ENCODE measurements at regions of chr11 and their contacts with region 1.

Region 1: GRCh38 chr11:114197799-114198500 is 98.2 kb upstream of the NNMT start:
- DNase-seq: no peak
- ATAC-seq: no peak
- H3K4me3 ChIP-seq: no peak overlapping the region
- H3K4me3 Mint-ChIP-seq: no peak overlapping the region
- H3K27ac ChIP-seq: no peak overlapping the region
- H3K27ac Mint-ChIP-seq: peak overlapping the region; percentile 10
- H3K4me1 ChIP-seq: peaks cover 27 to 47% of the 10 kb centered on the region in 2 donors
- H3K4me1 Mint-ChIP-seq: peaks cover 39% of the 10 kb centered on the region
- H3K27me3 ChIP-seq: no peaks in the 10 kb centered on the region
- H3K27me3 Mint-ChIP-seq: no peaks in the 10 kb centered on the region
- CTCF ChIP-seq: no peak

Region 2: DNA sequence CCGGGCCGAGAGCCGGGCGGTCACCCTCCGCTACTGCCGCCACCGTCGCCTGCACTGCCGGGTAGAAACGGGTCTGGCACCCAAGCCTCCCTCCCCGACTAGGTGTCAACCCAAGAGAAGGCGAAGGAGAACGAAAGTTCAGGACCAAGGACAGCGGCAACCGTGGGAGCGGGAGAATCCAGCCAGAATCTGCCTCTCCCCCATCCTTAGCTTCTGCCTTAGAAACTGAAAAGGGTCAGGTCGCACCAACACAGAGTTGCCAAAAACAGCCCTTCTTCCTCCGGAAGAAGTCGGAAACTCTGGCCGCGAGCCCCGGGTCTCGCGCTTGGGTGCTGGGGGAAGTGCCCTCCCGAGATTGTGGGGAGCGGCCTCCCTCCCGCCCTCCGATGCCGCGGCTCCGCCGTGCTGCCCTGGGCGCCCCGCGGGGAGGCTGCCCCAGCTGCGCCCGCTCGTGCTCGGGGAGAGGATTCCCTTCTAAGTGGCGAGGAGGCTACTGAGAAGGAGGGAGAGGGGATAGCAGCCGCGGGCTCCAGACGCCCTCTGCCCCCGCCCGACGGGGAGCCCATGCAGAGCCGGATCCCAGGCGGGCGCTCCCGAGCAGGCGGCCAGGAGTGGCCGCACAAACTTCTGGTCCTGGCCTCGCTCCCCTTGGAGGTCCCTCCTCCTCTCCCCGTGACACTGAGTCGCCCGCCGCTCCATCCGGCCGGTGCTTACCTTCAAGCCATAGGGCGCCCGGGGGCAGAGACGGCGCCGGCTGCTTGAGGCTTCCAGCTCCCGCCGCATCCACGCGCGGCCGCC is 723.4 kb before region 1 on chr11:
- CTCF ChIA-PET with region 1: no interaction called
- POLR2A ChIA-PET with region 1: no interaction called
- intact Hi-C with region 1: no loop called
- DNase-seq: peak; percentile 34
- ATAC-seq: no peak
- H3K4me3 ChIP-seq: no peak overlapping the region
- H3K4me3 Mint-ChIP-seq: peak overlapping the region; percentile 29
- H3K27ac ChIP-seq: no peak overlapping the region
- H3K27ac Mint-ChIP-seq: no peak overlapping the region
- H3K4me1 ChIP-seq: peaks cover 3 to 7% of the 10 kb centered on the region in 2 donors
- H3K4me1 Mint-ChIP-seq: peaks cover 7% of the 10 kb centered on the region
- H3K27me3 ChIP-seq: peaks cover 0 to 36% (median 19%) of the 10 kb centered on the region in 4 experiments
- H3K27me3 Mint-ChIP-seq: peaks cover 61% of the 10 kb centered on the region
- CTCF ChIP-seq: no peak

Region 3: GRCh38 chr11:114036156-114036811 is 161.7 kb before region 1 on chr11:
- CTCF ChIA-PET with region 1: interaction called, 12 read pairs
- POLR2A ChIA-PET with region 1: no interaction called
- intact Hi-C with region 1: loop called (anchors 2 kb)
- DNase-seq: peak; percentile 72
- ATAC-seq: peak; percentile 93
- H3K4me3 ChIP-seq: peak overlapping the region in 3 of 5 experiments; percentile 18 to 48 (median 22)
- H3K4me3 Mint-ChIP-seq: no peak overlapping the region
- H3K27ac ChIP-seq: no peak overlapping the region
- H3K27ac Mint-ChIP-seq: no peak overlapping the region
- H3K4me1 ChIP-seq: peaks cover 0 to 12% of the 10 kb centered on the region in 2 donors
- H3K4me1 Mint-ChIP-seq: peaks cover 7% of the 10 kb centered on the region
- H3K27me3 ChIP-seq: peaks cover 0 to 17% (median 4%) of the 10 kb centered on the region in 4 experiments
- H3K27me3 Mint-ChIP-seq: peaks cover 28% of the 10 kb centered on the region
- CTCF ChIP-seq: peak; percentile 69

Region 4: GRCh38 chr11:114257621-114258558 is 59.9 kb after region 1 on chr11:
- CTCF ChIA-PET with region 1: interaction called, 32 read pairs
- POLR2A ChIA-PET with region 1: no interaction called
- intact Hi-C with region 1: no loop called
- DNase-seq: no peak
- ATAC-seq: no peak
- H3K4me3 ChIP-seq: no peak overlapping the region
- H3K4me3 Mint-ChIP-seq: no peak overlapping the region
- H3K27ac ChIP-seq: peak overlapping the region; percentile 84 to 89
- H3K27ac Mint-ChIP-seq: peak overlapping the region; percentile 88
- H3K4me1 ChIP-seq: peaks cover 30 to 34% of the 10 kb centered on the region in 2 donors
- H3K4me1 Mint-ChIP-seq: peaks cover 32% of the 10 kb centered on the region
- H3K27me3 ChIP-seq: peaks cover 0 to 1% (median 0%) of the 10 kb centered on the region in 4 experiments
- H3K27me3 Mint-ChIP-seq: no peaks in the 10 kb centered on the region
- CTCF ChIP-seq: no peak